HCT116 (cell line): ENCODE measurements at regions of chr6 and their contacts with region 1.

Region 1: DNA sequence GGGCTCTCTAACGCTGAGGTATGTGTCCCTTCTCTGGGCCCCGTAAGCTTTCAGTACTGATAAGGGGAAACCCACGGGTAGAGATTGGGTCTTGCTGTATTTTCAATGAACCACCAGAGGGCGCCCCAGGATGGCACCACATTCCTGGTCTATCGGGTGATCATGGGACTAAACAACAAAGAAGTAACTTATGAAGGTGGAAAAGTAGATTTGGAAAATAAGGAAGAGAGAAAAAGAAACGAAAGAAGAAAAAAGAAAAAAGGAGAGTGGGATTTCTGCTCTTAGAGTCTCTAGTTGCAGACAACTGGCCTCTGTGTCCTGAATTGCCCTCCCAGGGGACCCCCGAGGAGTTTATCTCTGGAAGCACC is 93.8 kb downstream of the GMPR start:
- DNase-seq: no peak
- ATAC-seq: peak; percentile 87
- H3K4me3 ChIP-seq: no peak overlapping the region
- H3K27ac ChIP-seq: no peak overlapping the region
- H3K4me1 ChIP-seq: peaks cover 6 to 35% of the 10 kb centered on the region in 2 experiments; a peak in 3 of 4 replicates
- H3K27me3 ChIP-seq: no peaks in the 10 kb centered on the region
- CTCF ChIP-seq: peak; percentile 85 to 95 (median 92)
- POLR2A ChIP-seq: no peak
- RAD21 ChIP-seq: peak; percentile 95

Region 2: GRCh38 chr6:16409531-16410441 is 77.6 kb after region 1 on chr6:
- CTCF ChIA-PET with region 1: interaction called, 8 read pairs
- POLR2A ChIA-PET with region 1: no interaction called
- RAD21 ChIA-PET with region 1: no interaction called
- intact Hi-C with region 1: loop called (anchors 1 kb)
- DNase-seq: peak; percentile 40
- ATAC-seq: peak; percentile 95
- H3K4me3 ChIP-seq: peak overlapping the region; percentile 7 to 8; a peak in 3 of 4 replicates
- H3K27ac ChIP-seq: no peak overlapping the region
- H3K4me1 ChIP-seq: peaks cover 0 to 12% of the 10 kb centered on the region in 2 experiments; a peak in 1 of 4 replicates
- H3K27me3 ChIP-seq: no peaks in the 10 kb centered on the region
- CTCF ChIP-seq: peak; percentile 70 to 94 (median 90)
- POLR2A ChIP-seq: no peak
- RAD21 ChIP-seq: peak; percentile 66

Region 3: DNA sequence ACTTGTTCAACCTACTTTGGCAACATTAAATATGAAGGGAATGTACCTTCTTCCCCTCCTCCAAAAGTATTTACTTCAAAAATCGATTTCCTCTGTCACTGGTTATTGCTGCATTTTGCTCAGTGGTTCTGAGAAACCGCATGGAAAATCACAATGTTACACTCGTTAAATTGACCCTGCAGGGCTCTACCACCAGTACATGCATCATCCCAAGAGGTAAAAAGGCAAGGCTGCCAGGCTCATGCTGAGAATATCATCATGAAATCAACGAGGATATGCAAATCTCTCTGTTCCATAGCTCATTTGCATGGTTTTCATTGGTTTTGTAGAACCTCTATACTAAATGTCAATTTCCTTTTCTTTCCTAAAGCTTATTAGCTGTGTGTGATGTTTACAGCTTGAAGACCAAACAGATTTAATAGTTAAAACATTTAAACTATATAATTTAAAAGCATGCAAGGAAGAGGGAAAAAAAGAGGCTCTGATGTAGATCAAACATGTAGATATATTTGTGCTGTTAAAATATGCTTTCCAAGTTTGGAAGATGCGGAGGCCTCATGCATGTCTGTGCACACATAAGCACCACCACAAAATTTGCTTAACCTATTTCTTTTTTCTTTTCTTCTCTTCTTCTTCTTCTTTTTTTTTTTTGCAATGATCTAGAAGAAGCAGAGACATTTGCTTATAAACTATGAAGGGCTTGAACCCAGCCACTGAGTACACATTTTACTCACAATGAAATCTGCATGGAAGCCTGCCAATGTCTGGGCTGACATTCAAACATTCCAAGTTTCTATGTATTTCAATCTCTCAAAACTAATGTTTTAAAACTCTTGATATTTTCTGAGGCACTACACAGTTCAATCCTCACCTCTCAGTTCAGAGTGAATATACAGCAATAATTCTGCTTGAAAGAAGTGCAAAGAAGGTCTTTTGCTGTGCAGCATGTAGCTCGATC is 100.2 kb after region 1 on chr6:
- CTCF ChIA-PET with region 1: no interaction called
- POLR2A ChIA-PET with region 1: no interaction called
- RAD21 ChIA-PET with region 1: no interaction called
- intact Hi-C with region 1: no loop called
- DNase-seq: no peak
- ATAC-seq: no peak
- H3K4me3 ChIP-seq: no peak overlapping the region
- H3K27ac ChIP-seq: no peak overlapping the region
- H3K4me1 ChIP-seq: no peaks in the 10 kb centered on the region
- H3K27me3 ChIP-seq: no peaks in the 10 kb centered on the region
- CTCF ChIP-seq: no peak
- POLR2A ChIP-seq: no peak
- RAD21 ChIP-seq: no peak

Region 4: DNA sequence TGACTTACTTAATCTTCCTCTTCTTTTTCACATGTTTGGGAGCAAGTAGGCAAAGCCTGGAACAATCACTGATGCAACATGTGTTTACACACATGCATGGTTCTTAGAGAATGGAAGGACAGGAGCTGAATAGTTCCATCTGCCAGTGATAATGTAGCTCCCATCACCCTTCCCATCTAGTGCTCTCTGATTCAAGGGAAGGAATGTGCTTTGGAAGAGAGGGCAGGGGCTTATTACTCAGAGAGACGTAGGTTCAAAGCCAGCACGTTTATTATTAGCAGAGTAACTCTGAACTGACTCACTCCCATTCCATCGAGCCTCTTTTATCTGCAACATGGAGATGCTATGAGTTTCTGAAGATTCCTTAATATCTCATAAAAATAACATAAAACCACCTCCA is 118.1 kb after region 1 on chr6:
- CTCF ChIA-PET with region 1: no interaction called
- POLR2A ChIA-PET with region 1: no interaction called
- RAD21 ChIA-PET with region 1: no interaction called
- intact Hi-C with region 1: no loop called
- DNase-seq: peak; percentile 38
- ATAC-seq: peak; percentile 85
- H3K4me3 ChIP-seq: peak overlapping the region in 1 of 2 experiments; percentile 1; a peak in 1 of 4 replicates
- H3K27ac ChIP-seq: peak overlapping the region; percentile 11; the same call in 1 of the 2 replicates
- H3K4me1 ChIP-seq: peaks cover 5 to 29% of the 10 kb centered on the region in 2 experiments
- H3K27me3 ChIP-seq: no peaks in the 10 kb centered on the region
- CTCF ChIP-seq: no peak
- POLR2A ChIP-seq: no peak
- RAD21 ChIP-seq: no peak

Region 5: DNA sequence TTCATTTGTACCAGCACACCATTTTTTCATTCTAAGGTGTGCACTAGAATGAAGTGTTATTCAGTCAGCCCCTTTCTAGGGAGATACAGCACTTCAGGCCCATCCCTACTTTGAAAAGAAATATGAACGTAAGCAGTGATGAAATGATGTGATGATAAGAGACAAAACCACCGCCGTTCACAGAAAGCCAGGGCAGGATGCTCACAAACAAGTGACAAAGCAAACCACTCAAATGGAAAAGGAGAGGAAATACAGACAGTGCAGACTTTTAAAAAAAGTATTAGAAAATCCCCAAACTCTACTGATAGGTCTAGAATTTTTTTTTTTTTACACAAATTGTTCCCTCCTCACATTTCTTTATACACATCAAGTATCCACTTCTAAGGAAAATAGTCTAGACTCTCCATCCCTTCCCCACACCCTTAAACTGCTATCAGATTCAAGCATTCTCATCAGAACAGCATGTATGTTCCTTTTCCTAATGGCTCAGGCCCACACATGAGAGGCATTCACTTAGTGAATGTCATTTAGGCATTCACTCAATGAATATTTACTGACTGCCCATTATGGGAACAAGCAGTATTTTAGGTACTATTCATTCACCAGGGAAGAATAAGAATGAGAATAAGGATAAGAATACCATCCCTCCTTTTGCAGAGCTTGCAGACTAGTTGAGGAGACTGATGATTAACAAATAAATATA is 149.7 kb after region 1 on chr6:
- CTCF ChIA-PET with region 1: no interaction called
- POLR2A ChIA-PET with region 1: no interaction called
- RAD21 ChIA-PET with region 1: no interaction called
- intact Hi-C with region 1: no loop called
- DNase-seq: no peak
- ATAC-seq: no peak
- H3K4me3 ChIP-seq: no peak overlapping the region
- H3K27ac ChIP-seq: no peak overlapping the region
- H3K4me1 ChIP-seq: no peaks in the 10 kb centered on the region
- H3K27me3 ChIP-seq: no peaks in the 10 kb centered on the region
- CTCF ChIP-seq: no peak
- POLR2A ChIP-seq: no peak
- RAD21 ChIP-seq: no peak

Region 6: DNA sequence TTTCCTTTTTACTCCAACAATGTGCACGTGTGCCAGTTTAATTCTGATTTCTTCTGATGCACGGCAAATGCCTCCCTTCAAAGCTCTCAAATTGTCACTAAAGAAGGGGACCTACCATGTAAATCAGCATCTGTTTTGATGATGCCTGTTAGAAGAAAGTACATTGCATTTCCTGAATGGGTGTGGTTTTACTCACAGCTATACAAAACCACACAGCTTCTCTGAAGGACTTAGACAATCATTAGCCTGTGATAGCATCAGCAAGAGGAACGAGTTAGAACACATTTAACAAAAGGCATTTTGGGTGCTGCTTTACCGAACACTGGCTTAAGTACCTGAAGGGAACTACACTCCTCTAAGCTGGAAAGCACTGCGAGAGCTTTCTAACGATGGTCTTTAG is 319.7 kb after region 1 on chr6:
- CTCF ChIA-PET with region 1: no interaction called
- POLR2A ChIA-PET with region 1: no interaction called
- RAD21 ChIA-PET with region 1: no interaction called
- intact Hi-C with region 1: no loop called
- DNase-seq: no peak
- ATAC-seq: no peak
- H3K4me3 ChIP-seq: no peak overlapping the region
- H3K27ac ChIP-seq: no peak overlapping the region
- H3K4me1 ChIP-seq: no peaks in the 10 kb centered on the region; a peak in 1 of 4 replicates
- H3K27me3 ChIP-seq: no peaks in the 10 kb centered on the region
- CTCF ChIP-seq: no peak
- POLR2A ChIP-seq: no peak
- RAD21 ChIP-seq: no peak

Region 7: DNA sequence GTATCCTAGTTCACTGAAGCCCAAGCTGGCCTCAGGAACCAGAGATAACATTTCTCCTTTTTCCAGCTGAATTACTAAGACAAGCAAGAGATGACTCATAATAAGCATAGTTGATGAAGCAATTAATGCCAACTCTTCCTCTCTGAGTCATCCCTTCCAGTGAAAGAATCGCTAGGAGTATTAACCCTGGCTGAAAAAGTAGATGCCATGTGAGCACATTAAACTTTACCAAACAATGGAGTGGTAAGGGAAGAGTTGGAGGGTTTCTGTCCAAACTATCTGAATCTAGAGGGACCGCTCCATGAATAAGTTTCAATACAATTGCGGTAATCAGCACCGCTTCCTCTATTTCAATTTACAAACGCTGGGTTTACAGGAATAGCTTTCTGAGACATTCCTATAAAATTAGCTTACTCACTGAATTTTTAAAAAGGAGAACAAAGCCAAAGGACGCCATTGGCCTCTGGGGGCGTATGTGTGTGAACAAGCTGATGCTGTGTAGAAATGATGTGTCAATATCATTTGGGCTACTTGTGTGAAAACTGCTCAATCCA is 380.8 kb after region 1 on chr6:
- CTCF ChIA-PET with region 1: no interaction called
- POLR2A ChIA-PET with region 1: no interaction called
- RAD21 ChIA-PET with region 1: no interaction called
- intact Hi-C with region 1: loop called (anchors 5 kb)
- DNase-seq: peak; percentile 91
- ATAC-seq: peak; percentile 68
- H3K4me3 ChIP-seq: peak overlapping the region; percentile 8 to 38; a peak in 3 of 4 replicates
- H3K27ac ChIP-seq: peak overlapping the region; percentile 89
- H3K4me1 ChIP-seq: peaks cover 33 to 40% of the 10 kb centered on the region in 2 experiments
- H3K27me3 ChIP-seq: no peaks in the 10 kb centered on the region
- CTCF ChIP-seq: peak in 2 of 3 experiments; percentile 47 to 57; a peak in 4 of 6 replicates
- POLR2A ChIP-seq: peak; percentile 35
- RAD21 ChIP-seq: peak; percentile 28

Region 8: GRCh38 chr6:16964553-16965501 is 632.7 kb after region 1 on chr6:
- CTCF ChIA-PET with region 1: interaction called, 10 read pairs
- POLR2A ChIA-PET with region 1: no interaction called
- RAD21 ChIA-PET with region 1: no interaction called
- intact Hi-C with region 1: loop called (anchors 2 kb)
- DNase-seq: peak; percentile 39
- ATAC-seq: peak; percentile 99
- H3K4me3 ChIP-seq: no peak overlapping the region; a peak in 1 of 4 replicates
- H3K27ac ChIP-seq: no peak overlapping the region
- H3K4me1 ChIP-seq: peaks cover 2 to 8% of the 10 kb centered on the region in 2 experiments; a peak in 3 of 4 replicates
- H3K27me3 ChIP-seq: peaks cover 2% of the 10 kb centered on the region; the same call in 1 of the 2 replicates
- CTCF ChIP-seq: peak; percentile 72 to 97 (median 96); a peak in 5 of 6 replicates
- POLR2A ChIP-seq: no peak
- RAD21 ChIP-seq: peak; percentile 90